ENCODE measurements at regions of chr15 and their contacts with region 1.

Region 1: DNA sequence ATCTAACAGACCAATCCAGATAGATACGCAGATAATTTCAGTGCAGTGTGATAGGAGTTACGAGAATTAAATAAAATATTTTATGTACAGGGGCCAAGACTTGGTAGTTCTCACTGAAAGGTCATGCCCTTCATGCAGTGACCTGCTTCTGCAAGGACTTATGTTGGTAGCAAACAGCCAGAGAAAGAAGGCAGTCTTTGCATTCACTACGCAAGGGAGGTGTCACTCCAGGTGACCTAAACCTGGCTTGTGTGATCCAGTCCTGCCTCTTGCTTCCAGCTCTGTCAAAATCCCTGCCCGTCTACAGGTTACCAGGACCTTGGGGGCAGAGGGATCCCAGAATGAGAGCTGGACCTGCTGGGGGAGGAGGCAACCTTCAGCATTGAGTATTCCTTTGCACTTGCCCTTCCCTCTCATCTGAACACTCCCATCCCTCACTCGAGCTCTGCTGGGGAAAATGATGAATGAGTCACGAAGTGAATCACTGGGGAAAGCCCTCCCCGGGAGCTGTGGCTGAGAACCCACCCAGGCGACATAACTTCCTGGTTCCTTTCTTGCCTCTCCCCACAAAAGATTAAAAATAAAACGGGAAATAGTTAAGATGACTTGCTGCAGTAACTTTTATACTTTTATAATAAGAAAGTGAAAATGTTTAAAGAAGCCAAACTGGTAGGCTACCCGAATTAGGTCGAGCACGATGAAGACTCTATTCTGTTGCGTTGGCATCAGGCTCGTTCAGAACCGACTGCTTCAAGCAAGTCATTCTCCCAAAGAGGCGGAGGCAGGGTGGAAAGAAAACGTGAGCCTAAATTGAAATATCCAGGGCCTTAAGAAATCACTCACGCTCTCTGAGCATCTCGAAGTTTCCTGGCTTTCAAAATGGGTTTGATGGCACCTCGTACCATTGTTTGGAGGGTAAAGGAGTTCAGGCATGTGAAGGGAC is 216.1 kb downstream of the SLCO3A1 start:
- DNase-seq: peak; percentile 87
- H3K4me3 Mint-ChIP-seq: peak overlapping the region; percentile 67
- H3K27ac Mint-ChIP-seq: peak overlapping the region; percentile 75
- H3K4me1 Mint-ChIP-seq: peaks cover 8% of the 10 kb centered on the region
- H3K27me3 Mint-ChIP-seq: no peaks in the 10 kb centered on the region
- CTCF ChIP-seq: no peak

Region 2: GRCh38 chr15:92011611-92012367 is 57.8 kb before region 1 on chr15:
- CTCF ChIA-PET with region 1: no interaction called
- POLR2A ChIA-PET with region 1: no interaction called
- intact Hi-C with region 1: loop called (anchors 5 kb)
- DNase-seq: peak; percentile 45
- H3K4me3 Mint-ChIP-seq: peak overlapping the region; percentile 55
- H3K27ac Mint-ChIP-seq: peak overlapping the region; percentile 51
- H3K4me1 Mint-ChIP-seq: peaks cover 9% of the 10 kb centered on the region
- H3K27me3 Mint-ChIP-seq: no peaks in the 10 kb centered on the region
- CTCF ChIP-seq: no peak

Region 3: GRCh38 chr15:92021792-92022191 is 47.8 kb before region 1 on chr15:
- CTCF ChIA-PET with region 1: no interaction called
- POLR2A ChIA-PET with region 1: no interaction called
- intact Hi-C with region 1: no loop called
- DNase-seq: no peak
- H3K4me3 Mint-ChIP-seq: no peak overlapping the region
- H3K27ac Mint-ChIP-seq: no peak overlapping the region
- H3K4me1 Mint-ChIP-seq: no peaks in the 10 kb centered on the region
- H3K27me3 Mint-ChIP-seq: no peaks in the 10 kb centered on the region
- CTCF ChIP-seq: no peak

Measured in MCF 10A (cell line).